H1 (cell line): ENCODE measurements at regions of chr5 and their contacts with region 1.

Region 1: DNA sequence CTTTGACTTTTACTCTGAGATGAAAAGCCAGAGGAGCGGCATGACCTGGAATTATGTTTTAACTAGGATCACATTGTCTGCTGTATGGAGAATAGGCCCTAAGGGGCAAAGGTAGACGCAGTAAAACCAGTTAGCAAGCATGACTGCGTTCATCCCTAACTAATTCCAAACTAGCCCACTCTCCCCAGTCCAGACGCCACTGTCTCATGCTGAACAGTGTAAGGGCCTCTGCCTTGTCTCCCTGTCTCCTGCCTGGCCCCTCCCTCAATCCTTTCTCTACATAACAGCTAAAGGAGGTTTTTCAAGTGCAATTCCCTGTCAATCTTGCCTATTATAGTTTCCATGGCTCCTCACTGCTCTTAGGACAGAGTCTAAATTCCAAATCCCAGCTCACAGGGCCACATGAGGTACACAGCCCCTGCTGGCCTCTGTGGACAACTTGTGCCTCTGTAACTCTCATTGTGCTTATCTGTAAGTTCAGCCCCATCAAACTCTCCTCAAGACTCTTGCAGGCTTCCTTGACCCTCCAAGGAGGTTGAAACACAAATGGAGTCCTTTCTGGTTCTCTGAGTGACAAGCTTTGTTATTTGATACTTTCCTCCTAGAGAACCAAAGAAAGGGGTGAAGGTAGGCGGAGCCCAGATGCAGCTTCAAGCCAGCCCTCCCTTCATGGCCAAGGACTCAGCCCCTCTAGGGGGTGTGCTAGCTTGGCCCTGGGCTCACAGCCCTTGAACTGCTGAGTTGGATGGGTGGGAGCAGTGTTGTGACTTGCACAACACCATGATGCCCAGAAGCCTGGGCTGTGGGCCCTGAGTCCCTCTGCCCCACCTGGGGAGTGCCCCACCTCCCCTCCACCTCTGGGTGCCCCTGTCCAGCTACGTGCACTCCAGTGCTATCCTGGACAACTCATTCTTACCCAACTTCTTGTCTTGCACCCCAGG is 16.0 kb upstream of the SLC22A4 start:
- DNase-seq: no peak
- H3K4me3 ChIP-seq: no peak overlapping the region; a peak in 1 of 8 replicates
- H3K27ac ChIP-seq: no peak overlapping the region
- H3K4me1 ChIP-seq: peaks cover 0 to 10% (median 5%) of the 10 kb centered on the region in 4 experiments; a peak in 4 of 7 replicates
- H3K27me3 ChIP-seq: no peaks in the 10 kb centered on the region
- CTCF ChIP-seq: no peak
- EP300 ChIP-seq: no peak
- POLR2A ChIP-seq: no peak
- RAD21 ChIP-seq: no peak

Region 2: GRCh38 chr5:132073231-132074013 is 204.8 kb before region 1 on chr5 and contains the start of gene CSF2:
- CTCF ChIA-PET with region 1: no interaction called
- POLR2A ChIA-PET with region 1: no interaction called
- DNase-seq: no peak
- H3K4me3 ChIP-seq: no peak within 1 kb of the TSS
- H3K27ac ChIP-seq: no peak within 1 kb of the TSS
- H3K4me1 ChIP-seq: peaks cover 0 to 2% (median 0%) of the 10 kb centered on the region in 4 experiments; a peak in 1 of 7 replicates
- H3K27me3 ChIP-seq: no peaks in the 10 kb centered on the region
- CTCF ChIP-seq: no peak
- EP300 ChIP-seq: no peak
- POLR2A ChIP-seq: no peak
- RAD21 ChIP-seq: no peak
- total RNA-seq, gene CSF2: not detected in 2 replicates

Region 3: GRCh38 chr5:132260714-132261551 is 17.3 kb before region 1 on chr5:
- CTCF ChIA-PET with region 1: interaction called, 54 read pairs
- POLR2A ChIA-PET with region 1: interaction called, 10 read pairs
- DNase-seq: peak in 1 of 2 experiments; percentile 23
- H3K4me3 ChIP-seq: no peak overlapping the region
- H3K27ac ChIP-seq: no peak overlapping the region
- H3K4me1 ChIP-seq: peaks cover 0 to 19% (median 6%) of the 10 kb centered on the region in 4 experiments; a peak in 6 of 7 replicates
- H3K27me3 ChIP-seq: peaks cover 0 to 10% (median 9%) of the 10 kb centered on the region in 4 experiments; a peak in 3 of 7 replicates
- CTCF ChIP-seq: no peak
- EP300 ChIP-seq: no peak
- POLR2A ChIP-seq: no peak
- RAD21 ChIP-seq: no peak

Region 4: GRCh38 chr5:132293066-132293991 is 15.1 kb after region 1 on chr5:
- CTCF ChIA-PET with region 1: interaction called, 21 read pairs
- POLR2A ChIA-PET with region 1: interaction called, 26 read pairs
- DNase-seq: peak in 1 of 2 experiments; percentile 89
- H3K4me3 ChIP-seq: peak overlapping the region; percentile 53 to 75 (median 65)
- H3K27ac ChIP-seq: peak overlapping the region; percentile 74
- H3K4me1 ChIP-seq: peaks cover 0 to 12% (median 3%) of the 10 kb centered on the region in 4 experiments; a peak in 5 of 7 replicates
- H3K27me3 ChIP-seq: peaks cover 2 to 21% (median 16%) of the 10 kb centered on the region in 4 experiments
- CTCF ChIP-seq: no peak
- EP300 ChIP-seq: peak in 1 of 2 experiments; percentile 56; a peak in 1 of 3 replicates
- POLR2A ChIP-seq: peak in 1 of 2 experiments; percentile 81; a peak in 2 of 3 replicates
- RAD21 ChIP-seq: no peak

Region 5: DNA sequence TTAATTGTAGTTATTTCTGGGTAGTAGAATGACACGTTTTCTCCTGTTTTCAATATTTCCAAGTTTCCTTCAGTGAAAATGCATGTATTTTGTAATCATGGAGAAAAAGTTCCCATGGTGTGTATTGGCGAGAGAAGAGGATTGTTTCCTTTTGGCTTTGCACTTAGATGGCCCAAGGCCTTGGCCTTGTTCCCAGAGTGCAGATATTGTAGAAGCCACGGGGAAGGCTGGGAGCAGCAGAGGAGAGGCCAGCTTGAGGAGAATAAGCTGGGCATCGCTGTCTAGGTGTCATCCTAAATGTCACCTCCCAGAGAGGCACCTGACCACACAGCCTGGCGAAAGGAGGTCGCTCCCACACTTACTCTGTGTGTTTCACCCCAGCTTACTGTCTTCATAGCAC is 168.4 kb after region 1 on chr5:
- CTCF ChIA-PET with region 1: no interaction called
- POLR2A ChIA-PET with region 1: no interaction called
- DNase-seq: no peak
- H3K4me3 ChIP-seq: no peak overlapping the region
- H3K27ac ChIP-seq: no peak overlapping the region
- H3K4me1 ChIP-seq: peaks cover 8 to 16% (median 12%) of the 10 kb centered on the region in 4 experiments
- H3K27me3 ChIP-seq: no peaks in the 10 kb centered on the region
- CTCF ChIP-seq: no peak
- EP300 ChIP-seq: no peak
- POLR2A ChIP-seq: no peak
- RAD21 ChIP-seq: no peak

Region 6: GRCh38 chr5:132576123-132576522 is 297.9 kb after region 1 on chr5:
- CTCF ChIA-PET with region 1: no interaction called
- POLR2A ChIA-PET with region 1: no interaction called
- DNase-seq: no peak
- H3K4me3 ChIP-seq: no peak overlapping the region
- H3K27ac ChIP-seq: no peak overlapping the region
- H3K4me1 ChIP-seq: no peaks in the 10 kb centered on the region
- H3K27me3 ChIP-seq: no peaks in the 10 kb centered on the region
- CTCF ChIP-seq: no peak
- EP300 ChIP-seq: no peak
- POLR2A ChIP-seq: no peak
- RAD21 ChIP-seq: no peak